ENCODE measurements at regions of chr2 and their contacts with region 1.

Region 1: DNA sequence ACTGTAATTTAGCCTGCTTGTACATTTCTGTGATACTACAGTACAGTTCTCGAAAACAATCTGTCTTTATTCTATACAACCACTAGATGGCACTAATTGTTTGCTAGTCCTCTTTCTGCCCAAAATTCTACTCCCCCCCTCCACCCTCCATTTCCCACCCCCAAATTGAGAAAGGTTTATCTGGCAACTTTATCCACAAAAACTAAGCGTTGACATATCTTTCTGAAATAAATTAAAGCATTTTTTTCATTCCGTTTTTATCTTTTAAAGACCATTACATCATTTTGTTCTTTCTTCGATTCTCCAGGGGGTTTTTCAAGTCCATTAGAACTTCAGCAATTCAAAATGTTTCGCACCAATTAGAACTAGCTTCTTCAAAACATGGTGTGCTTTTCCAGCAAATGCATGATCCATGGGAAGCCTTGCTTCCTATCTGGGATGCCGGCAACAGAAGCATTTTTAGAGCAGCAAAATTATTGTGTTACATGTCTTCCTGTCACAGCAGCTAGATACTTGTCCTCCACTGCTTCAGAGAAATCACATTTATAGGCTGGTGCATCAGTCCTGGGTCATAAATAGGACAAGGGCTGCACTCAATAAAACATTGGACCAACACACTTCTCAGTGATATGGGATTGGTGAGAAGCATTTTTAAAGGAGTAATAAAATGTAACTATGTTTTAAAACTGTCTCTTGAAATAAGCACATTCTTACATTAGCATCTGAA is 241.3 kb downstream of the PAX3 start:
- DNase-seq: no peak
- ATAC-seq: peak; percentile 54
- H3K4me3 ChIP-seq: no peak overlapping the region
- H3K27ac ChIP-seq: no peak overlapping the region
- H3K4me1 ChIP-seq: no peaks in the 10 kb centered on the region
- H3K27me3 ChIP-seq: peaks cover 9% of the 10 kb centered on the region
- CTCF ChIP-seq: peak; percentile 55
- POLR2A ChIP-seq: no peak
- RAD21 ChIP-seq: peak; percentile 55

Region 2: GRCh38 chr2:222413295-222413911 is 355.9 kb after region 1 on chr2:
- CTCF ChIA-PET with region 1: no interaction called
- POLR2A ChIA-PET with region 1: no interaction called
- dilution Hi-C with region 1: no loop called
- in situ Hi-C with region 1: no loop called
- intact Hi-C with region 1: no loop called
- DNase-seq: no peak
- ATAC-seq: no peak
- H3K4me3 ChIP-seq: no peak overlapping the region
- H3K27ac ChIP-seq: no peak overlapping the region
- H3K4me1 ChIP-seq: no peaks in the 10 kb centered on the region
- H3K27me3 ChIP-seq: no peaks in the 10 kb centered on the region
- CTCF ChIP-seq: no peak
- POLR2A ChIP-seq: no peak
- RAD21 ChIP-seq: no peak

Region 3: GRCh38 chr2:222582928-222583327 is 525.4 kb after region 1 on chr2:
- CTCF ChIA-PET with region 1: no interaction called
- POLR2A ChIA-PET with region 1: no interaction called
- dilution Hi-C with region 1: no loop called
- in situ Hi-C with region 1: loop called (anchors 25 kb)
- intact Hi-C with region 1: no loop called
- DNase-seq: no peak
- ATAC-seq: no peak
- H3K4me3 ChIP-seq: no peak overlapping the region
- H3K27ac ChIP-seq: no peak overlapping the region
- H3K4me1 ChIP-seq: no peaks in the 10 kb centered on the region
- H3K27me3 ChIP-seq: no peaks in the 10 kb centered on the region
- CTCF ChIP-seq: 0 out of 2 replicates have a peak, but pooled peaks have one; percentile 3
- POLR2A ChIP-seq: no peak
- RAD21 ChIP-seq: no peak

Measured in IMR-90 (cell line).